Activated T-helper 2 cell treated with anti-CD3 and anti-CD28 coated beads, Interferon-gamma antibody, Interleukin-2, Interleukin-4, amounts not matched to agents 10 μg/mL and 5 μg/mL and 100 μg/mL, durations not matched to agents 14 hours and 24 hours and 36 hours (primary cell): ENCODE measurements at regions of chr15 and their contacts with region 1.

Region 1: GRCh38 chr15:42575188-42576039 is at the start of gene STARD9:
- DNase-seq: peak; percentile 94
- H3K4me3 Mint-ChIP-seq: peak within 1 kb of the TSS; percentile 93
- H3K27ac Mint-ChIP-seq: peak within 1 kb of the TSS; percentile 77
- H3K4me1 Mint-ChIP-seq: peaks cover 34% of the 10 kb centered on the region
- H3K27me3 Mint-ChIP-seq: peaks cover 23% of the 10 kb centered on the region
- total RNA-seq, gene STARD9: 10.0 and 11.9 TPM in 2 replicates

Region 2: GRCh38 chr15:42273102-42273899 is 302.1 kb before region 1 on chr15 and contains the starts of genes GANC and TMEM87A:
- intact Hi-C with region 1: loop called (anchors 1 kb)
- DNase-seq: peak; percentile 96
- H3K4me3 Mint-ChIP-seq: peak within 1 kb of the TSS; percentile 98
- H3K27ac Mint-ChIP-seq: peak within 1 kb of the TSS; percentile 100
- H3K4me1 Mint-ChIP-seq: peaks cover 34% of the 10 kb centered on the region
- H3K27me3 Mint-ChIP-seq: no peaks in the 10 kb centered on the region
- total RNA-seq, gene GANC: 19.5 and 22.4 TPM in 2 replicates
- total RNA-seq, gene TMEM87A: 34.1 and 34.8 TPM in 2 replicates

Region 3: GRCh38 chr15:42444415-42445063 is 130.9 kb before region 1 on chr15:
- intact Hi-C with region 1: no loop called
- DNase-seq: no peak
- H3K4me3 Mint-ChIP-seq: no peak overlapping the region
- H3K27ac Mint-ChIP-seq: no peak overlapping the region
- H3K4me1 Mint-ChIP-seq: no peaks in the 10 kb centered on the region
- H3K27me3 Mint-ChIP-seq: no peaks in the 10 kb centered on the region

Region 4: DNA sequence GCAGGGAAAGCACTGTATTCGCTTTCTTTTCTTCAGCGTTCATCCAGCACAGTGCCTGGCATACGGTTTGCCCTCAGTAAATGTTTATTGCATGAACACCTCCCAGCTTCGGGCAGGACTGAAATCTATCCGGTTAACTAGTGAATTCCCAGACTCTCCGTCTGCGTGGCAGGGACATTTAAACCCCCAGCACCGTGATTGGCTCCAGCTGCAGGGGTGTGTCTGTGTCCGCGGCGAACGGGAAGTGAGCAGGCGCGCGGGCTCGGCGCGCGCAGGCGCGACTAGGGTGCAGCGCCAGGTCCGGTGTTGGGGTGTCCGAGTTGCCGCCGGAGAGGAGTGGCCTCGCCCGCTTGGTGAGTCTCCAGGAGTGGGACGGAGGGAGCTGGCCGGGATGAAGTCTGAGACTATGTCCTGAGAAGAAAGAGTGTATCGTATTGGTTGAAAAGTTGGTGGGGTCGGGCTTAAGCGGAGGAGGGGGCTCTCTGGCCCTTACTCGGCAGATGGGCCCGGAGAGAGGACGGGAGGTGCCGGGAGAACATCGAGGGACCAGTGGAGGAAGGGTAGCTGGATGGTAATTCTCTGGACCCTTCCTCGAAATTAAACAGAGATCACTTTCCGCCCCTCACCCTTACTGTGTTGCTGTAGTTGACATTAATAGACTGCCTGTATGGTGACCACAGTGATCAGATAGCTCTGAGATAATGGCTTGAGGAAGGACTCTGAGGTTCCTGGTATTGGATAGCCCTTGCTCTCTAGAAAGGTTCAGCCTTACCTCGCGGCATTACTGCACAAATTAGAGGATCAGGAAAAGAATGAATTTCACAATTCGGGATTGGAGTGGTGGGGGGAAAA is 79.8 kb before region 1 on chr15 and contains the start of gene SNAP23:
- intact Hi-C with region 1: loop called (anchors 1 kb)
- DNase-seq: peak; percentile 83
- H3K4me3 Mint-ChIP-seq: peak within 1 kb of the TSS; percentile 99
- H3K27ac Mint-ChIP-seq: peak within 1 kb of the TSS; percentile 94
- H3K4me1 Mint-ChIP-seq: peaks cover 56% of the 10 kb centered on the region
- H3K27me3 Mint-ChIP-seq: no peaks in the 10 kb centered on the region
- total RNA-seq, gene SNAP23: 78.0 and 78.9 TPM in 2 replicates

Region 5: GRCh38 chr15:42548253-42549031 is 27.0 kb before region 1 on chr15 and contains the starts of genes HAUS2 and LRRC57:
- intact Hi-C with region 1: loop called (anchors 2 kb)
- DNase-seq: peak; percentile 84
- H3K4me3 Mint-ChIP-seq: peak within 1 kb of the TSS; percentile 92
- H3K27ac Mint-ChIP-seq: peak within 1 kb of the TSS; percentile 92
- H3K4me1 Mint-ChIP-seq: peaks cover 36% of the 10 kb centered on the region
- H3K27me3 Mint-ChIP-seq: no peaks in the 10 kb centered on the region
- total RNA-seq, gene HAUS2: 42.9 and 45.5 TPM in 2 replicates
- total RNA-seq, gene LRRC57: 21.0 and 22.5 TPM in 2 replicates

Region 6: DNA sequence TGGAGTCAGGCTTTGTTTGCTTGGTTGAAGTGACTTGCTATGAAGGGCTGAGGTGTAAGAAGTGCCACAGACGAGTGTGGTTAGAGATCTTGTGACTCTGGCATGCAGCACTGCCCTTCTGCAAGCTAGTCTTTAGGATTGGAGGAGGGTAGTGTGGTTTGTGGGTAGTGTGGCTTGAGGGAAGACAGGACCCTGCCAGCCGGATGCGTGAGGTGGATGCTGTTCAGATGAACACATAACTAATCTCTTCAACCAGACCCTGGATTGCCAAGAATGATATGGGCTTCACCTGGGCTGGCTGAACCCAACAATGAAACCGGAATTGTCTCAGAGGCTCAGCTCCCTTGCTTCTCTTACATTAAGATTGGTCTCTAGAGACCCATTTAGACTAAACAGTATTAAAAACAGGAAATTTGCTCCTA is 32.7 kb after region 1 on chr15:
- intact Hi-C with region 1: loop called (anchors 2 kb)
- DNase-seq: peak; percentile 74
- H3K4me3 Mint-ChIP-seq: peak overlapping the region; percentile 3
- H3K27ac Mint-ChIP-seq: peak overlapping the region; percentile 62
- H3K4me1 Mint-ChIP-seq: peaks cover 46% of the 10 kb centered on the region
- H3K27me3 Mint-ChIP-seq: no peaks in the 10 kb centered on the region

Region 7: GRCh38 chr15:42650208-42651066 is 75.0 kb after region 1 on chr15:
- intact Hi-C with region 1: loop called (anchors 1 kb)
- DNase-seq: peak; percentile 60
- H3K4me3 Mint-ChIP-seq: no peak overlapping the region
- H3K27ac Mint-ChIP-seq: peak overlapping the region; percentile 48
- H3K4me1 Mint-ChIP-seq: peaks cover 14% of the 10 kb centered on the region
- H3K27me3 Mint-ChIP-seq: no peaks in the 10 kb centered on the region